Caco-2 (cell line): ENCODE measurements at regions of chr2 and their contacts with region 1.

Region 1: GRCh38 chr2:183038341-183039300 is at the start of gene NCKAP1:
- DNase-seq: peak; percentile 90 to 98
- H3K4me3 ChIP-seq: peak within 1 kb of the TSS; percentile 99
- H3K4me3 Mint-ChIP-seq: peak within 1 kb of the TSS; percentile 89
- H3K27ac Mint-ChIP-seq: peak within 1 kb of the TSS; percentile 91
- H3K4me1 ChIP-seq: peaks cover 14% of the 10 kb centered on the region
- H3K4me1 Mint-ChIP-seq: peaks cover 19% of the 10 kb centered on the region
- H3K27me3 ChIP-seq: no peaks in the 10 kb centered on the region; the same call in 1 of the 2 replicates
- H3K27me3 Mint-ChIP-seq: no peaks in the 10 kb centered on the region
- CTCF ChIP-seq: peak; percentile 59 to 85
- total RNA-seq, gene NCKAP1: 154 and 162 TPM in 2 replicates

Region 2: GRCh38 chr2:182924306-182924705 is 114.3 kb before region 1 on chr2:
- CTCF ChIA-PET with region 1: no interaction called
- POLR2A ChIA-PET with region 1: no interaction called
- intact Hi-C with region 1: no loop called
- DNase-seq: no peak
- H3K4me3 ChIP-seq: no peak overlapping the region
- H3K4me3 Mint-ChIP-seq: no peak overlapping the region
- H3K27ac Mint-ChIP-seq: no peak overlapping the region
- H3K4me1 ChIP-seq: no peaks in the 10 kb centered on the region
- H3K4me1 Mint-ChIP-seq: no peaks in the 10 kb centered on the region
- H3K27me3 ChIP-seq: no peaks in the 10 kb centered on the region
- H3K27me3 Mint-ChIP-seq: no peaks in the 10 kb centered on the region
- CTCF ChIP-seq: no peak

Region 3: DNA sequence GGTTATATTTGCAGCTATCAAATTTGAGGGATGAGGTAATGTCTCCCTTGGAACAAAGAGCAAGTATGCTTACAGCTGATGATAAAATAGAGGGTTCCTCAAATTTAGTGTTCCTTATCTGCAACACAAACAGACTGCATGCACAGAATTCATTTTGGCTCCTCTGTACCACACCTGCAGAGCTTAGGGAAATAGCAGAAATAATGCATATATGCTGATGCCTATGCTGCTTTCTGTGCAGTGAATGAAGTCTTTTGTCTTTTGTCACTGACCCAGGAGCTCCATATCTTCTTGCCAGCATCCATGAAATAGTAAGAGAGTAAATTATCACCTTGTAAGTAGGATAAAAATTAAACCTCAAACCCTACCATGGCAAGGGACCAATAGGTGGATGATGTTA is 70.1 kb before region 1 on chr2:
- CTCF ChIA-PET with region 1: no interaction called
- POLR2A ChIA-PET with region 1: no interaction called
- intact Hi-C with region 1: no loop called
- DNase-seq: no peak
- H3K4me3 ChIP-seq: no peak overlapping the region
- H3K4me3 Mint-ChIP-seq: no peak overlapping the region
- H3K27ac Mint-ChIP-seq: no peak overlapping the region
- H3K4me1 ChIP-seq: peaks cover 2% of the 10 kb centered on the region
- H3K4me1 Mint-ChIP-seq: peaks cover 24% of the 10 kb centered on the region
- H3K27me3 ChIP-seq: no peaks in the 10 kb centered on the region
- H3K27me3 Mint-ChIP-seq: no peaks in the 10 kb centered on the region
- CTCF ChIP-seq: no peak

Region 4: GRCh38 chr2:183057333-183057985 is 18.8 kb after region 1 on chr2:
- CTCF ChIA-PET with region 1: interaction called, 3 read pairs
- POLR2A ChIA-PET with region 1: no interaction called
- intact Hi-C with region 1: loop called (anchors 1 kb)
- DNase-seq: no peak
- H3K4me3 ChIP-seq: no peak overlapping the region
- H3K4me3 Mint-ChIP-seq: no peak overlapping the region
- H3K27ac Mint-ChIP-seq: no peak overlapping the region
- H3K4me1 ChIP-seq: peaks cover 42% of the 10 kb centered on the region
- H3K4me1 Mint-ChIP-seq: peaks cover 18% of the 10 kb centered on the region
- H3K27me3 ChIP-seq: no peaks in the 10 kb centered on the region
- H3K27me3 Mint-ChIP-seq: no peaks in the 10 kb centered on the region
- CTCF ChIP-seq: no peak

Region 5: DNA sequence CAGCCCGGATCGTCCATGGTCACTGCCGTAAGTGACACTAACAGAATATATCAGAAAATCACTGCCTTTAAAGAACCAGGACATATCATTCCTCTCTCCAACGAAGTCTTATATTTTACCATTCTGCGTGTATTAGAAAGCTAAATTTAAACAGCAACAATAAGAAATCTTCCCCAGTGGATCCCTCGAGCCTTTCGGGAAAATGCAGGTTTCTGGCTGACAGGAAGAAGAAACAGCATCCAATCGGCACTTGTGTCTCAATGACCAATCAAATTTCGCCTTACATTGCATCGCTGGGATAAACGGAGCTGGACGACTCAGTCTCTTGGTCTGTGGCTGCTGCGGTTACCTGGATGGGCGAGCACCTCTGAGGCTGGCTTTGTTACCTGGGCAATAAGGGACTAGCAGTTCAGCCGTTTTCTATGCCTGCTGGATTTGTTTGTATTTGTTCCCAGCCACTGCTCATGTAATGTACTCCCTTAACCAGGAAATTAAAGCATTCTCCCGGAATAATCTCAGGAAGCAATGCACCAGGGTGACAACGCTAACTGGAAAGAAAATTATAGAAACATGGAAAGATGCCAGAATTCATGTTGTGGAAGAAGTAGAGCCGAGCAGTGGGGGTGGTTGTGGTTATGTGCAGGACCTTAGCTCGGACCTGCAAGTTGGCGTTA is 40.0 kb after region 1 on chr2 and contains the start of gene DUSP19:
- CTCF ChIA-PET with region 1: no interaction called
- POLR2A ChIA-PET with region 1: interaction called, 4 read pairs
- intact Hi-C with region 1: loop called (anchors 1 kb)
- DNase-seq: peak; percentile 97
- H3K4me3 ChIP-seq: peak within 1 kb of the TSS; percentile 53
- H3K4me3 Mint-ChIP-seq: peak within 1 kb of the TSS; percentile 92
- H3K27ac Mint-ChIP-seq: peak within 1 kb of the TSS; percentile 66
- H3K4me1 ChIP-seq: peaks cover 8% of the 10 kb centered on the region; the same call in 1 of the 2 replicates
- H3K4me1 Mint-ChIP-seq: no peaks in the 10 kb centered on the region
- H3K27me3 ChIP-seq: no peaks in the 10 kb centered on the region
- H3K27me3 Mint-ChIP-seq: no peaks in the 10 kb centered on the region
- CTCF ChIP-seq: no peak
- total RNA-seq, gene DUSP19: 3.6 and 3.9 TPM in 2 replicates

Region 6: GRCh38 chr2:183093857-183094657 is 55.4 kb after region 1 on chr2:
- CTCF ChIA-PET with region 1: no interaction called
- POLR2A ChIA-PET with region 1: no interaction called
- intact Hi-C with region 1: no loop called
- DNase-seq: peak in 1 of 2 experiments; percentile 14
- H3K4me3 ChIP-seq: no peak overlapping the region
- H3K4me3 Mint-ChIP-seq: no peak overlapping the region
- H3K27ac Mint-ChIP-seq: no peak overlapping the region
- H3K4me1 ChIP-seq: peaks cover 11% of the 10 kb centered on the region
- H3K4me1 Mint-ChIP-seq: peaks cover 6% of the 10 kb centered on the region
- H3K27me3 ChIP-seq: no peaks in the 10 kb centered on the region
- H3K27me3 Mint-ChIP-seq: no peaks in the 10 kb centered on the region
- CTCF ChIP-seq: peak in 1 of 2 experiments; percentile 12

Region 7: GRCh38 chr2:183124222-183124956 is 85.8 kb after region 1 on chr2 and contains the start of gene NUP35:
- CTCF ChIA-PET with region 1: no interaction called
- POLR2A ChIA-PET with region 1: no interaction called
- intact Hi-C with region 1: loop called (anchors 1 kb)
- DNase-seq: peak; percentile 91 to 92
- H3K4me3 ChIP-seq: peak within 1 kb of the TSS; percentile 73
- H3K4me3 Mint-ChIP-seq: peak within 1 kb of the TSS; percentile 96
- H3K27ac Mint-ChIP-seq: peak within 1 kb of the TSS; percentile 98
- H3K4me1 ChIP-seq: 0 out of 2 replicates have a peak, but pooled peaks cover 5% of the 10 kb centered on the region
- H3K4me1 Mint-ChIP-seq: peaks cover 14% of the 10 kb centered on the region
- H3K27me3 ChIP-seq: no peaks in the 10 kb centered on the region
- H3K27me3 Mint-ChIP-seq: no peaks in the 10 kb centered on the region
- CTCF ChIP-seq: no peak
- total RNA-seq, gene NUP35: 34.7 and 36.1 TPM in 2 replicates